PC-9 (cell line): ENCODE measurements at regions of chr21 and their contacts with region 1.

Region 1: GRCh38 chr21:42073145-42074092 is 2.3 kb downstream of the UMODL1 start:
- DNase-seq: no peak
- H3K4me3 ChIP-seq: no peak overlapping the region
- H3K27ac ChIP-seq: no peak overlapping the region
- H3K4me1 ChIP-seq: no peaks in the 10 kb centered on the region
- H3K27me3 ChIP-seq: no peaks in the 10 kb centered on the region; the same call in 1 of the 2 replicates
- CTCF ChIP-seq: no peak

Region 2: DNA sequence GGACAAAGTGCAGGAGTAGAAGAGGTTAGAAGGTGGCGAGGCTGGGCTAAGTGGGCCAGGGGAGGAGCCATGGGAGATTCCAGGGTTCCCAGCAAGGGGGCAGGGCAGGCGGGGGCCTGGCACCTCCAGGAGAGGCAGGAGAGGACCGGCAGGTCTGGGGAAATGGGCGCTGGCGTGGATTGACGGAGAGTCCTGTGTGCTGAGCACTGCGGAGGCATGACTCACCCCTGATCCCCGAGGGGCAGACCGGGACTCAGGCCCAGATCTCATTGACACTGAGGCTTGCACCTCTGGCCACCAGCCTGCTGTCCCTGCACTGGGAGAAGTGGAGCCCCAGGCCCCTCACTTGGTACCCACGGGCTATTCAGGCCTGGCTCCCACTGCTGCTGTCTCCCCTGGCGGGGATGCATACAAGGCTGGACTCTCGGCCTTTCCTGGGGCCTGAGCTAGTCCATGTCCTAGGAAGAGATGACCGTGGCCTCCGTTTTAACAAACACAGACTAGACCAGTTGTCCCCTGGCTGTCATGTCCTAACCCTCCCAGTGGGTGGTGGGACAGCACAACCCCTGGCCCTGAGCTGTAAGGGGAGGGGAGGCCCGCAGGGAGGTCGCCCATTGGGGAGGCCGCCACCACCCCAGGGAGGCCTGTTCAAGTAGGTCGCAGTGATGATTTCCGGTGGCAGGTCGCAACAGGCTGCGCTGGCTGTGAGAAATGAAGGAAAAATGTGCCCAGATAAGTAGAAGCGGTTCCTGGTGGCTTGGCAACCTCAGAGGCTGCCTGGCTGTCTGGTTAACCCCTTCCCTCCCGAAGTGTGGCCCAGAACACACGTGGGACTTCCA is 346.3 kb before region 1 on chr21:
- CTCF ChIA-PET with region 1: no interaction called
- POLR2A ChIA-PET with region 1: no interaction called
- intact Hi-C with region 1: no loop called
- DNase-seq: peak; percentile 89 to 93
- H3K4me3 ChIP-seq: peak overlapping the region; percentile 27; the same call in 1 of the 2 replicates
- H3K27ac ChIP-seq: peak overlapping the region; percentile 93
- H3K4me1 ChIP-seq: peaks cover 56% of the 10 kb centered on the region
- H3K27me3 ChIP-seq: no peaks in the 10 kb centered on the region
- CTCF ChIP-seq: peak; percentile 37; the same call in 1 of the 2 replicates

Region 3: GRCh38 chr21:41832596-41833496 is 240.6 kb before region 1 on chr21:
- CTCF ChIA-PET with region 1: no interaction called
- POLR2A ChIA-PET with region 1: interaction called, 10 read pairs
- intact Hi-C with region 1: no loop called
- DNase-seq: no peak
- H3K4me3 ChIP-seq: no peak overlapping the region
- H3K27ac ChIP-seq: no peak overlapping the region
- H3K4me1 ChIP-seq: no peaks in the 10 kb centered on the region
- H3K27me3 ChIP-seq: no peaks in the 10 kb centered on the region
- CTCF ChIP-seq: no peak

Region 4: DNA sequence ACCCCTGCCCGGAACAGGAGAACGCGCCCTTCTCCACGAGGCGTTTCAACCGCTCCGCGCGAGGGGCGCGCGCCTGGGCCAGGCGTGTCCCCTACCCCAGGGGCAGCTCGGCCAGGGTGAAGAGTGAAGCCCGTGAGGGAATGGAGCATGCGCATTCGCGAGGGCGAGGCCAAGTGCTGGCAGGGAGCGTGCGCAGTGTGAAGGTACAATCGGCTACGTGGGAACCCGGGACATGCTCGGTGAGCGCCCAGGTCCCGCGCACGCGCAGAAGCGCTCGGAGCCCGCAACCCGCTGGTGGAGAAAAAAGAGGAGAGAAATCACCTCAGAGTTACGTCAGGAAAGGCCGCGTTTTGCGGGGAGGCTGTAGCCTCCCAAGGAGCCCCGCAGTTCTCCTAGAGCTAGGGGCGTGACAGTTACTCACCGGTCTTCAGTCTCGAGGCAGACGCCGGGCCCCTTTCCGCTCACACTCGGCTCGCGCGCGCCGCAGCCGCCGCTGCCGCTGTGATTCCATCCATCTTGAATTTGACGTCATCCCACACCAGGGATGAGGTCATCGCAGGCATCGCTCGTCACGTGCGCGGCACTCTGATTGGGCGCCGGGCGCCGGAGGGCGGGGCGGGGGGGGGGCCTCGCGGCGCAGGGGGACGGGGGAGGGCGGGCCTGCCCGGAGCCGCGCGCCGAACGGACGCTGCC is 63.4 kb before region 1 on chr21 and contains the start of gene ZBTB21:
- CTCF ChIA-PET with region 1: no interaction called
- POLR2A ChIA-PET with region 1: no interaction called
- intact Hi-C with region 1: no loop called
- DNase-seq: peak; percentile 88 to 96
- H3K4me3 ChIP-seq: peak within 1 kb of the TSS; percentile 85
- H3K27ac ChIP-seq: peak within 1 kb of the TSS; percentile 90
- H3K4me1 ChIP-seq: peaks cover 15% of the 10 kb centered on the region
- H3K27me3 ChIP-seq: no peaks in the 10 kb centered on the region
- CTCF ChIP-seq: no peak
- total RNA-seq, gene ZBTB21: 9.1 and 13.5 TPM in 2 replicates

Region 5: DNA sequence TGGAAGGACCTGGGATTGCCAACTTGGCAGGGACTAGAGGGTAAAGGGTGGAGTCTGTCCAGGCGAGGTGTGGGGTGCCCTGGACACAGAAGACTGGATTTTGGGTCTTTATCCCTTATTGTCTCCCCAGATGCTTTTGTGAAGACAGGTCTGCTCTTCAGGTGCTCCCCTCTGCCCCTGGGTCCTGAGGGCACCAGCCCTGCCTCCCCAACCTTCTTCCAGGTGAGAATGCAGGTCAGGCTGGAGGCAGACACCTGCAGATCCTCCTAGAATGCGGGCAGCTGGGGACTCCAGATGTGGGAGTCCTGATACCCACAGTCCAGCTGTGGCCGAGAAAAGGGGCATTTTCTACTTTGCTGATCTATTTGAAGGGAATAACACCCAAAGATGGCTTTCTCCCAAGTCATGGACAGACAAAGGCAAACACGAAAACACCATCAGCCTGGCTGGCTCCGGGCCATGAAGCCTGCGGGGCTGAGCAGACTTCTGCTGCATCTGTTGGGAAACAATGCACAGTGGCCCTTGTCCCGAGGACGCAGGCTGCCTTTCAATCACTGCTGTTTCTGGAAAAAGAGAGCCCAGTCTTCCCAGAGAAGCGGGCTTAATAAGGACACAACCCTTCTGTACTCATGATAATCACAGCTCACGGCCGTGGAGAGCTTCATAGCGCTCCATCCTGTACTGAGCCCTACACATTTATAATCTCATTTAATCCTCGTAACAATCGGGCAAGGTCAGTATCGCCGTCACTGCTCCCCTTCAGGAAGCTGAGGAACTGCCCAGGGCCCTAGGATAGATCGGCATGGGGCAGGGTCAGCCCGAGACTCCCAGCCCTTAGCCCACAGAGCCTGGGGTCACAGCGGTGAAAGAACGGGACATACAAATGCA is 83.5 kb after region 1 on chr21:
- CTCF ChIA-PET with region 1: no interaction called
- POLR2A ChIA-PET with region 1: no interaction called
- intact Hi-C with region 1: no loop called
- DNase-seq: no peak
- H3K4me3 ChIP-seq: no peak overlapping the region
- H3K27ac ChIP-seq: no peak overlapping the region
- H3K4me1 ChIP-seq: no peaks in the 10 kb centered on the region
- H3K27me3 ChIP-seq: no peaks in the 10 kb centered on the region
- CTCF ChIP-seq: no peak